Activated CD4-positive, alpha-beta memory T cell treated with anti-CD3 and anti-CD28 coated beads for 36 hours (primary cell): ENCODE measurements at regions of chr20 and their contacts with region 1.

Region 1: DNA sequence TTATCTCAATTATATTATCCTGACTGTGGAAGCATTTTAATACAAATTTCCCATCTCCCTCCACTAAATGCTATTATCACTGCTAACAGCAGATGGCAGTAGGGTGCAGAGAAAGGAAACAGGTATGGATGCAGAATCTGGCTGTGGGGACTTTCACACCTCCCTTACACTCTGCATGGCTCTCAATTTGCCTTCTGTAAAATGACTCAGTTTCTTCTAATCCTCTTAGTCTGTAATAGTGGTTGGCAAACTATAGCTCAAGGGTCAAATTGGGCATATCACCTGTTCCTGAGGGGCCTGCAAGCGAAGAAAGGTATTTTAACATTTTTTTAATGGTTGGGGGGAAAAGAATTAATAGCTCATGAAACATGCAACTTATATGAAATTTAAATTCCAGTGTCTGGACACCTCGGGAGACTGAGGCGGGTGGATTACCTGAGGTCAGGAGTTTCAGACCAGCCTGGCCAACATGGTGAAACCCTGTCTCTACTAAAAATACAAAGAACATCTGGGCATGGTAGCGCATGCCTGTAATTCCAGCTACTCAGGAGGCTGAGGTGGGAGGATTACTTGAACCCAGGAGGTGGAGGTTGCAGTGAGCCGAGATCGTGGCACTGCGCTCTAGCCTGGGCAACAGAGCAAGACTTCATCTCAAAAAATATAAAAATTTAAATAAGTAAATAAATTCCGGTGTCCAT is 83.5 kb downstream of the ZMYND8 start:
- DNase-seq: peak; percentile 53
- H3K4me3 Mint-ChIP-seq: peak overlapping the region; percentile 51
- H3K27ac Mint-ChIP-seq: peak overlapping the region; percentile 83
- H3K4me1 Mint-ChIP-seq: peaks cover 39% of the 10 kb centered on the region
- H3K27me3 Mint-ChIP-seq: no peaks in the 10 kb centered on the region

Region 2: GRCh38 chr20:47170895-47171285 is 102.2 kb before region 1 on chr20:
- CTCF ChIA-PET with region 1: no interaction called
- POLR2A ChIA-PET with region 1: no interaction called
- intact Hi-C with region 1: no loop called
- DNase-seq: no peak
- H3K4me3 Mint-ChIP-seq: no peak overlapping the region
- H3K27ac Mint-ChIP-seq: no peak overlapping the region
- H3K4me1 Mint-ChIP-seq: no peaks in the 10 kb centered on the region
- H3K27me3 Mint-ChIP-seq: peaks cover 17% of the 10 kb centered on the region

Region 3: GRCh38 chr20:47258745-47259695 is 14.0 kb before region 1 on chr20:
- CTCF ChIA-PET with region 1: interaction called, 11 read pairs
- POLR2A ChIA-PET with region 1: interaction called, 3 read pairs
- intact Hi-C with region 1: no loop called
- DNase-seq: no peak
- H3K4me3 Mint-ChIP-seq: no peak overlapping the region
- H3K27ac Mint-ChIP-seq: peak overlapping the region; percentile 21
- H3K4me1 Mint-ChIP-seq: peaks cover 13% of the 10 kb centered on the region
- H3K27me3 Mint-ChIP-seq: no peaks in the 10 kb centered on the region

Region 4: DNA sequence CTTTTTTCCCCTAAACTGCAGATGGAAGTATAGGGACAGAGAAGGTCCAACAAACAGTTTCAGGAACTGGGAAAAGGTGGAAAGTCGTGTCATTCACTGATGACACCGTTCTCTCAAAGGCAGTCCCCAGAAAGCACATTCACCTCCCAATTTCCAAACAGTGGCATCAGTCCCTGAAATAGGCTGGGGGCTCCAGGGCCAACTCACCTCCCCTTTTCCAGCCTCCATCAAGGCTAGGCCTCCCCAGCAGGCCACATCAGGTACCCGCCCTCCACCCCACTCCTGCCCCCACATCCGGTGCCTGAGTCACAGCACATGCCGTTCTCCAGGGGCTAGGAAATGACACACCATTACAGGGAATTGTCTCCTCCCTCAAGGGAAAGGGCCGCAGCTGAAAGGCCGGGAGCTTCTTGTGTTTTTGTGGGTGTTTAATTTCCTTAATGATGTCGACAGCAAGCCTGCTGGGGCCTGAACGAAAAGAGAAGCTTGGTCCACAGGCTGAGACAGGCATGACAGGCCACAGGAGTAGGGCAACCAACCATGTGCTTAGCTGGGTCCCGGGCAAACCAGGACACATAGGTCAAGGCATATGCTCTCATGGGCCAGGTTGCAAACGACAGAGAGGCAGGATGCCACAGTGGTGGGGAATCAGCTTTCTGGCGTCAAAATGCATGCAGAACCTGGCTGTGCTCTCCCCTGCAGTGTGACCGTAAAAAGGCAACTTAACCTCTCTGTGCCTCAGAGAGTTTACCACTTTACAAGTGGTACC is 44.3 kb after region 1 on chr20:
- CTCF ChIA-PET with region 1: interaction called, 8 read pairs
- POLR2A ChIA-PET with region 1: no interaction called
- intact Hi-C with region 1: loop called (anchors 2 kb)
- DNase-seq: peak; percentile 81
- H3K4me3 Mint-ChIP-seq: peak overlapping the region; percentile 20
- H3K27ac Mint-ChIP-seq: peak overlapping the region; percentile 82
- H3K4me1 Mint-ChIP-seq: peaks cover 58% of the 10 kb centered on the region
- H3K27me3 Mint-ChIP-seq: no peaks in the 10 kb centered on the region

Region 5: DNA sequence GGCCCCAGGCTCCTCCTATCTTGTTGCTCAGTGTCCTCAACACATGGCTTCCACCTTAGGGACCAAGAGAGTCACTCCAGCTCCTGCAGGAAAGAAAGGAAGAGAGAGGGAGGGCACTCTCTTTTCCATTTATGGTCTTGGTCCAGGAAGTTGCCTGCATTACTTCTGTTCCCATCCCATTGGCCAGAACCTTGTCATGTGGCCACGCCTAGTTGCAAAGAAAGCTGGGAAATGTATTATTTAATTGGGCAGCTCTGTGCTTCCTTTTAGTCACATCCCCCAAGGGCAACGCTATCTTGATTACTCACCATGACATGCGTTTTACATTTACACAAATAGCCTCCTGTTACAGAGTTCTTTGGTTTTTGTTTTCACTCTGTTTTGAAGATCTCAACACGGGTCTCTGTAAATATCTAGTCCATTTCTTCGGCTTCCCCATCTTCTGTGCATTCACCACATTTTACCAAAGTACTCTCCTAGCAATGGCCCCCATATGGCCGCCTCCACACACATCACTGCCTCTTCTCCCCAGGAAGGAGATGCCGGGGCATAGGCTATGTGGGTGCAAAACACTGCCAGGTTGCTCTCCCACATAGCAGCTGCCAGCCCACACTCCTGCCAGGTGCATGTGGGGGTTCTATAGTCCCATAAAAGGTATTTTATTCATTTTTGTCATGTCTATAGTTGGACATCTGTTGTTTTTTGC is 119.1 kb after region 1 on chr20:
- CTCF ChIA-PET with region 1: interaction called, 13 read pairs
- POLR2A ChIA-PET with region 1: no interaction called
- intact Hi-C with region 1: no loop called
- DNase-seq: peak; percentile 29
- H3K4me3 Mint-ChIP-seq: no peak overlapping the region
- H3K27ac Mint-ChIP-seq: peak overlapping the region; percentile 31
- H3K4me1 Mint-ChIP-seq: peaks cover 17% of the 10 kb centered on the region
- H3K27me3 Mint-ChIP-seq: no peaks in the 10 kb centered on the region

Region 6: DNA sequence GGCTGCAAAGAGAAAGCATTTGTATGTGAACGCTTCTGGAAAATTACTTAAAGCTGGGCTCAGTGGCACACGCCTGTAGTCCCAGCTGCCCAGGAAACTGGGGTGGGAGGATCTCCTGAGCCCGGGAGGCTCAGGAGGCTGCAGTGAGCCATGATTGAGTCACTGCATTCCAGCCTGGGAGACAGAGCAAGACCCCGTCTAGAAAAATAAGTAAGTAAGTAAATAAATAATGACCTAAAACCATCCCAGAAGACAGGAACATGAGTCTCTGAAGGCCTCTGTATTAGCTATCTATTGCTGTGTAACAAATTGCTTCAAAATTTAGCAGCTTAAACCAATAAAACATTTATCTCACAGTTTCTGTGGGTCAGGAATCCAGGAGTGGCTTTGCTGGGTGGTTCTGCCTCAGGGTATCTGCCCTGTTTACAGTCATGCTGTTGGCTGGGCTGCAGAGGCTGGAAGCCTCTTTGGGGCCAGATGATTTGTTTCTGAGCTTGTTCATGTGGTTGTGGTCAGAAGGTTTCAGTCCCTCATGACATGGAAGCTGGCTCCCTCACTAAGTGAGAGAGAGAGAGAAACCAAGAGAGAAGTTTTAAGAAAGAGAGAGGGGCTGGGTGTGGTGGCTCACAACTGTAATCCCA is 180.2 kb after region 1 on chr20:
- CTCF ChIA-PET with region 1: interaction called, 5 read pairs
- POLR2A ChIA-PET with region 1: no interaction called
- intact Hi-C with region 1: loop called (anchors 1 kb)
- DNase-seq: peak; percentile 77
- H3K4me3 Mint-ChIP-seq: no peak overlapping the region
- H3K27ac Mint-ChIP-seq: peak overlapping the region; percentile 74
- H3K4me1 Mint-ChIP-seq: peaks cover 35% of the 10 kb centered on the region
- H3K27me3 Mint-ChIP-seq: no peaks in the 10 kb centered on the region

Region 7: GRCh38 chr20:47501483-47502270 is 228.6 kb after region 1 on chr20 and contains the start of gene NCOA3:
- CTCF ChIA-PET with region 1: interaction called, 6 read pairs
- POLR2A ChIA-PET with region 1: no interaction called
- intact Hi-C with region 1: loop called (anchors 5 kb)
- DNase-seq: peak; percentile 96
- H3K4me3 Mint-ChIP-seq: peak within 1 kb of the TSS; percentile 92
- H3K27ac Mint-ChIP-seq: peak within 1 kb of the TSS; percentile 89
- H3K4me1 Mint-ChIP-seq: peaks cover 54% of the 10 kb centered on the region
- H3K27me3 Mint-ChIP-seq: no peaks in the 10 kb centered on the region
- total RNA-seq, gene NCOA3: 72.0 to 81.8 TPM

Region 8: DNA sequence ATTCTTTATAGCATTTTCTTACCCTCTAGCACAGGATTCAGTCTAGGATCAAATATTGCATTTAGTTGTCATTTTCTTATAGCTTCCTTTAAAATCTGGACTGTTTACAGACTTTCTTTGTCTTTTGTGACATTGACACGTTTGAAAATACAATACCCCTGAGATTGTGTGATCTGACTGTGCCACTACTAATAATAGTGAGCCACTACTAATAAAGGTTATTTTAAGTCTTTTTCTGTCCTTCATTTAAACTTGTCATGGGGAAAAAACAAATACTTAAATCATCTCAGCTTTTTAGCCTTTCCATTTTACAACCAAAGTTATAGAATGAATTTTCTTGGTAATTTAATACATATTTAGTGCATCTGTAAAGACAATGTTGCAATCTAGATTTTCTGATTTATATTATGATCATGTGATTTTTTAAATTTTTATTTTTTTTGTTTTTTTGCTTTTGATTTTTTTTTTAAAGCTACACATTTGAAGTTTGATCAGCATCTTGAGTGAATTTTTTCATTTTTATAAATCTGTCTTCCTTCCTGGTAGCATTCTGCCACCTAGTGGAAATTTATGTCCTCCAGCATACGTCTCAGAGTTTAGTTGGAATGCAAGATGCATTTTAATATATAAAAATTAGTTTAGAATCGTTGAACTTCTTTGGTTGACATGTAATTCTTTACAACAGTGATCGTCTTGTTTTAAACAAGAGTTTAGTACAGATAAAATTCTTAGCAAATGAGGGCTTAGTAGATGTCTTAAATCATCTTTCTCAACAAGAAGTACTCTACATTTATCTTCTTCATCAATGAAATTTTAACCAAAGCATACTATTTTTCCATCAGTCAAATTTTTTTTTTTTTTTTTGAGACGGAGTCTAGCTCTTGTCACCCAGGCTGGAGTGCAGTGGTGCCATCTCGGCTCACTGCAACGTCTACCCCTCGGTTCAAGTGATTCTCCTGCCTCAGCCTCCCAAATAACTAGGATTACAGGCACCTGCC is 348.1 kb after region 1 on chr20:
- CTCF ChIA-PET with region 1: interaction called, 60 read pairs
- POLR2A ChIA-PET with region 1: interaction called, 3 read pairs
- intact Hi-C with region 1: loop called (anchors 1 kb)
- DNase-seq: no peak
- H3K4me3 Mint-ChIP-seq: no peak overlapping the region
- H3K27ac Mint-ChIP-seq: peak overlapping the region; percentile 11
- H3K4me1 Mint-ChIP-seq: peaks cover 33% of the 10 kb centered on the region
- H3K27me3 Mint-ChIP-seq: no peaks in the 10 kb centered on the region